Activated CD4-positive, alpha-beta memory T cell treated with anti-CD3 and anti-CD28 coated beads, Interleukin-2, amount 10 ng/mL, durations not matched to agents 7 days and 5 days (primary cell): ENCODE measurements at regions of chr2 and their contacts with region 1.

Region 1: GRCh38 chr2:68709421-68709911 is 25.1 kb upstream of the ARHGAP25 start:
- DNase-seq: no peak
- H3K4me3 Mint-ChIP-seq: no peak overlapping the region
- H3K27ac Mint-ChIP-seq: no peak overlapping the region
- H3K4me1 Mint-ChIP-seq: peaks cover 36% of the 10 kb centered on the region
- H3K27me3 Mint-ChIP-seq: peaks cover 8% of the 10 kb centered on the region

Region 2: DNA sequence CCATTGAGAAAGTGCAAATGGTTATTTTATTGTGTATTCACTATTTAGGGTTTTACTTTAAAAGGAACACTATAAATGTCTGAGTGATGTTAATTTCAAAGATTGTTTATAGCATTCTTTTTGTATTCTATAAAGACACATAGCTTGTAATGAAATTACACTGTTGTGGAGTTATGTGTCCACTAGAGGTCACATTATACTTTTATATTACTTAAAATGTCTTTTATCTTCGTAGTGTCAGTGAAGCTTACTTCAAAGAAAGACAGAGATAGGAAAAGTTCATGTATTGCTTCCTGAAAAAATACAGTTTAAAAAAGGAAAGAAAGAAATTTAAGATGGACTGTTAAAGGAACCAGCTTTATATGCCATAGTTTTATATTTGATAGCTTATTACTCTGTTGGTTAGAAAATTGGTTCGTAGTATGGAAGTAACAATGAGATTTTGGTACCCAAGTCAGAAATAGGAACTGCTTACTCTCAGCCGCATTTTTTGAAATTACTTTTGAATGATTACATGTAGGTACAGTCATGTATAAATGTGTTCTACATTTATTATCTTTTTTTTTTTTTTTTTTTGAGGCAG is 221.6 kb before region 1 on chr2:
- CTCF ChIA-PET with region 1: interaction called, 12 read pairs
- POLR2A ChIA-PET with region 1: no interaction called
- DNase-seq: no peak
- H3K4me3 Mint-ChIP-seq: no peak overlapping the region
- H3K27ac Mint-ChIP-seq: no peak overlapping the region
- H3K4me1 Mint-ChIP-seq: peaks cover 4% of the 10 kb centered on the region
- H3K27me3 Mint-ChIP-seq: no peaks in the 10 kb centered on the region

Region 3: DNA sequence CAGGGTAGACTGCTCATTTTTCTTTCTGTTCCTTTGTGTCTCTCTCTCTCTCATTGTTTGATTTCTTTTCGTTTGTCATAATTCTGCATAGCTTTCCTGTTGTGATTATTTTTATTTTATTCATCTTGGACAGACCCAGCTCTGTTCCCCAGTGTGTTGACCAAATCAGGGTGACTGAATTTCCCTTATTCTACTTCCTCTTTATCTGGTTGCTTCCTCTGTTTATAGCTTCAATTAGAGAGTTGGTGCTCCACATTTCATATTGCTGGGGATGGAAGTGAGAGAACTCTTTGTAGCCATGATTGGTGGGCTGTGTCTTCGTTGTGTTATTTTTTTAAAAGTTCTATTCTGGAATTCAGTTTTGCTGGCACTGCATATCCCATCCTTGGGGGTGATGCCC is 47.0 kb before region 1 on chr2:
- CTCF ChIA-PET with region 1: no interaction called
- POLR2A ChIA-PET with region 1: no interaction called
- DNase-seq: no peak
- H3K4me3 Mint-ChIP-seq: no peak overlapping the region
- H3K27ac Mint-ChIP-seq: no peak overlapping the region
- H3K4me1 Mint-ChIP-seq: peaks cover 5% of the 10 kb centered on the region
- H3K27me3 Mint-ChIP-seq: peaks cover 56% of the 10 kb centered on the region

Region 4: DNA sequence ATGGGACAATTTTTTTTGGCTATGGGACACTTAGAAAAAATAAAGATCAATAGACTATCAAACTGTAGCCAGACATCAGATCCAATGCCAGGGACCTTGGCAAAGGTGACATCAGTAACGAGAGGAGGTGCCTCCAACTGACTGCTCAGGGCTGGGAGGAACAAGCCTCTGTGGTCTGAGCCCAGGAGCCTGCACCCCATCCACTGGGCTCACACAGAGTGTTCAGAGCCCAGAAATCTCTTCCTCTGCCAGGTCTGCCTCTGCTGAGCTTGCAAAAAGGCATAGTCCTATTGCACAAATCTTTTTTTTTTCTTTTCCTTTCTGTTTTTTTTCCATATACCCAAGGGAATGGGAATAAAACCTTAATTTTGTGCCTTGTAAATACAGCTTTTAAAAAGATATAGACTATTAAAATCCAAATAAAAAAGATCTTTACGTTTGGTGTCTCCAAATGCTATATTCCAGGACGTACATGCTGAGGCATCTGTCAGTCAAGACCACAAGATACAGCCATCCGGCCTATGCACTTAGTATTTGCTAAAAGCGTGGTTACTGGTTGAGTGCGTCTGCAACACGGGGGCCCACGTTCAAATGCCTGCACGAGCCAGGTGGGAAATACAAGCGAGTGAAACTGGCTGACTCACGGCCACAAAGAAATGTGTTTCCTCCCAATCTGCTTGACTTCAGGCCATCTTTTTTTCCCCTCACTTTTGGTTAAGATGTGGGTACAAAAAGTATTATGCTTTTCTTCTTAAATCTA is 17.3 kb after region 1 on chr2:
- CTCF ChIA-PET with region 1: interaction called, 33 read pairs
- POLR2A ChIA-PET with region 1: no interaction called
- DNase-seq: peak; percentile 89
- H3K4me3 Mint-ChIP-seq: peak overlapping the region; percentile 54
- H3K27ac Mint-ChIP-seq: peak overlapping the region; percentile 95
- H3K4me1 Mint-ChIP-seq: peaks cover 83% of the 10 kb centered on the region
- H3K27me3 Mint-ChIP-seq: no peaks in the 10 kb centered on the region

Region 5: DNA sequence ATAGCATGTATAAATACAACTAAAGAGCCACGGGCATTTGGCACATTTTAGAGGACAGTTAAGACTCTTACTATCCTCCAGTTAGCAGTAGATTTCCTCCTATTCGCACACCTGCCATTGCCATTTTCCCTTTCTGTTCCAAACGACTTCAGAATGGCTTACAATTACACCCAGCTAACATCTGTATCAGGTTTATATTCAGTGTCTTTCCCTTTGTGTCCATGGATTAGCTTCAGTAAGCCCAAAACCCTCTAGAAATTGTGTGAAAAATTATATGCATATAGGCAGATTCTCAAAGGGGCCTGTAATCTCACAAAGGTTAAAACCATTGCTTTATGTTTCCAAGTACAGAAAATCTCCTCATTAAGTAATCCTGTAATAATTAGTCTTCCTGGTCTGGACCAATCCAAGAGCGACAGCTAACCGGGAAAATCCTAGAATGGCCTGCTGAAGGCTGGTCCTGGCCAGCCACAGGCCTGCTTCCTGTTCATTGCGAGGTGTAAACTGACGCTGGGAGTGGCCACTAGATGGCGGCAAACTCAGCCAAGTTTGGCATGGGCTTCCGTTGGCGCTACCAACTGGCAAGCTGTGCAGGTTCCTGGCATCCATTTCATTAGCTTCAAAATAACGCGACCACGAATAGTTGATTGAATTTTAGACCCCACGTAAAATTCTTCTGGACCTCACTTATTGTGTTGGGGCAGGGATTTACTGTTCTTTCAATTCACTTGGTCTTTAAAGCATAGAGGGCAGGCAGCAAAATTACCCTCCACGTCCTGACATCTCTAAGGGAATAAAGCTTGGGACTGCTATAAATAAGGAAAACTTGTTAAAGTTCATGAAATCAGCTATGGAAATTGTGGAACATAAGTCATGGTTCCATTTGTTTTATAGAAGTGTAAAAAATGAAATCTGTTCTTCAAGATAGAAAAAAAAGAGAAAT is 42.2 kb after region 1 on chr2:
- CTCF ChIA-PET with region 1: interaction called, 51 read pairs
- POLR2A ChIA-PET with region 1: interaction called, 491 read pairs
- DNase-seq: peak; percentile 93
- H3K4me3 Mint-ChIP-seq: peak overlapping the region; percentile 11
- H3K27ac Mint-ChIP-seq: peak overlapping the region; percentile 77
- H3K4me1 Mint-ChIP-seq: peaks cover 92% of the 10 kb centered on the region
- H3K27me3 Mint-ChIP-seq: no peaks in the 10 kb centered on the region

Region 6: GRCh38 chr2:68837164-68837860 is 127.8 kb after region 1 on chr2:
- CTCF ChIA-PET with region 1: interaction called, 41 read pairs
- POLR2A ChIA-PET with region 1: interaction called, 4 read pairs
- DNase-seq: peak; percentile 67
- H3K4me3 Mint-ChIP-seq: no peak overlapping the region
- H3K27ac Mint-ChIP-seq: peak overlapping the region; percentile 28
- H3K4me1 Mint-ChIP-seq: peaks cover 43% of the 10 kb centered on the region
- H3K27me3 Mint-ChIP-seq: peaks cover 4% of the 10 kb centered on the region

Region 7: GRCh38 chr2:68943581-68944568 is 234.4 kb after region 1 on chr2:
- CTCF ChIA-PET with region 1: interaction called, 13 read pairs
- POLR2A ChIA-PET with region 1: no interaction called
- DNase-seq: peak; percentile 50
- H3K4me3 Mint-ChIP-seq: no peak overlapping the region
- H3K27ac Mint-ChIP-seq: no peak overlapping the region
- H3K4me1 Mint-ChIP-seq: peaks cover 4% of the 10 kb centered on the region
- H3K27me3 Mint-ChIP-seq: peaks cover 64% of the 10 kb centered on the region